H1 (cell line): ENCODE measurements at regions of chr11 and their contacts with region 1.

Region 1: GRCh38 chr11:88337181-88337986 is at the start of gene CTSC:
- DNase-seq: peak; percentile 60 to 96
- H3K4me3 ChIP-seq: peak within 1 kb of the TSS; percentile 72 to 96 (median 87)
- H3K27ac ChIP-seq: peak within 1 kb of the TSS; percentile 90
- H3K4me1 ChIP-seq: peaks cover 0 to 11% (median 4%) of the 10 kb centered on the region in 4 experiments; a peak in 4 of 7 replicates
- H3K27me3 ChIP-seq: no peaks in the 10 kb centered on the region
- CTCF ChIP-seq: no peak
- EP300 ChIP-seq: 0 out of 3 replicates have a peak, but pooled peaks of 1 of the 2 experiments have one; percentile 25
- POLR2A ChIP-seq: peak; percentile 84 to 94
- RAD21 ChIP-seq: 0 out of 4 replicates have a peak, but pooled peaks of 1 of the 2 experiments have one; percentile 1
- total RNA-seq, gene CTSC: 362 and 369 TPM in 2 replicates

Region 2: DNA sequence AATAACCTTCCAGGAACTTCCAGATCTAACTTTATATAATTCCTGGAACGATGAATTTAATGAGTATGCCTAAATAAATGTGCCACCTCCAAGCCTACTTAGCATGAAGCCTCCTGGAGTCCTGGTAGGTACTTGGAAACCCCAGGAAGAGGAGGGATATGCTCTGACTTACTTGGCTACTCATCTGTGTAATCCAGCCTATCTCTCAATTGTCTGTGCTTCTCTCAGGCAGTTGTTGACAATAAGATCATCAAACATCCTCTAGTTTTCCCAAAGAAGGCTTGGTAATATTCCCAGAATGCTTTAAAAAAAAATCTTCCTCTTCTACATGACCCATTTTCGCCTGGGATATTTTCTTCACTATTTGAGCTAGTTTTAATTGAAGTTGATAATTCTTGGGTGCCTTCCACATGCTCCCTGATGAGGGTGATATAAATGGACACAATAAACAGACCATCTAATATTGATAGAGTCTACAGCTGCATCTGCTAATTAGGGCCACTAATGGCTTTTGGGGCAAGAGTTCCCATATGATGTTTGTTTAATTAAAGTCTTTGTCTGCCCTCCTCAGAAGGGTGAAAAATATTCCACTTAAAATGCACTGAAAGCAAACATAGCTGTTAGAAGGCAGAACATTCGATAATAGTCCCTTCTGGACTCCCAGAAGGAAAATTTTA is 86.7 kb before region 1 on chr11:
- CTCF ChIA-PET with region 1: no interaction called
- POLR2A ChIA-PET with region 1: no interaction called
- DNase-seq: no peak
- H3K4me3 ChIP-seq: no peak overlapping the region
- H3K27ac ChIP-seq: no peak overlapping the region
- H3K4me1 ChIP-seq: no peaks in the 10 kb centered on the region
- H3K27me3 ChIP-seq: no peaks in the 10 kb centered on the region
- CTCF ChIP-seq: no peak
- EP300 ChIP-seq: no peak
- POLR2A ChIP-seq: no peak
- RAD21 ChIP-seq: no peak

Region 3: DNA sequence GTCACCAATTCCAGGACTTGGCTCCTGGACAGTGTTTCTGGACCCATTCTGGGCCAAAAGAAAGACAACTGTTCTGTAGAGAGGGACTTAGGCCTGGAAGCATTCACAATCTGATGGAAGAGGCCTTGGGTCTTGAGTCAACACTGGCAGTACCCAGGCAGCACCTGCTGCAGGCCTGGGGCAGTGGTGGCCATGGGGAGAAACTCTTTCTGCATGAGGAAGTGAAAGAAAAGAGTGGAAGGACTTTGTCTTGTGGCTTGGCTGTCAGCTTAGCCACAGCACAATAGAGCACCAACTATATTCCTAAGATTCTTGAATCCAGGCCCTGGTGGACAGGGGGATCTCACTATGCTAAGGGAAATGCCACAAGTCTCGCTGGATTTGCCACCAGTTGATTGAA is 70.5 kb before region 1 on chr11:
- CTCF ChIA-PET with region 1: no interaction called
- POLR2A ChIA-PET with region 1: no interaction called
- DNase-seq: no peak
- H3K4me3 ChIP-seq: no peak overlapping the region
- H3K27ac ChIP-seq: no peak overlapping the region
- H3K4me1 ChIP-seq: no peaks in the 10 kb centered on the region
- H3K27me3 ChIP-seq: no peaks in the 10 kb centered on the region
- CTCF ChIP-seq: no peak
- EP300 ChIP-seq: no peak
- POLR2A ChIP-seq: no peak
- RAD21 ChIP-seq: no peak

Region 4: GRCh38 chr11:88301488-88302140 is 35.8 kb before region 1 on chr11:
- CTCF ChIA-PET with region 1: interaction called, 8 read pairs
- POLR2A ChIA-PET with region 1: interaction called, 50 read pairs
- DNase-seq: no peak
- H3K4me3 ChIP-seq: peak overlapping the region in 1 of 4 experiments; percentile 19; a peak in 1 of 8 replicates
- H3K27ac ChIP-seq: peak overlapping the region; percentile 75
- H3K4me1 ChIP-seq: peaks cover 2 to 16% (median 12%) of the 10 kb centered on the region in 4 experiments; a peak in 6 of 7 replicates
- H3K27me3 ChIP-seq: no peaks in the 10 kb centered on the region
- CTCF ChIP-seq: no peak
- EP300 ChIP-seq: no peak
- POLR2A ChIP-seq: no peak
- RAD21 ChIP-seq: no peak

Region 5: DNA sequence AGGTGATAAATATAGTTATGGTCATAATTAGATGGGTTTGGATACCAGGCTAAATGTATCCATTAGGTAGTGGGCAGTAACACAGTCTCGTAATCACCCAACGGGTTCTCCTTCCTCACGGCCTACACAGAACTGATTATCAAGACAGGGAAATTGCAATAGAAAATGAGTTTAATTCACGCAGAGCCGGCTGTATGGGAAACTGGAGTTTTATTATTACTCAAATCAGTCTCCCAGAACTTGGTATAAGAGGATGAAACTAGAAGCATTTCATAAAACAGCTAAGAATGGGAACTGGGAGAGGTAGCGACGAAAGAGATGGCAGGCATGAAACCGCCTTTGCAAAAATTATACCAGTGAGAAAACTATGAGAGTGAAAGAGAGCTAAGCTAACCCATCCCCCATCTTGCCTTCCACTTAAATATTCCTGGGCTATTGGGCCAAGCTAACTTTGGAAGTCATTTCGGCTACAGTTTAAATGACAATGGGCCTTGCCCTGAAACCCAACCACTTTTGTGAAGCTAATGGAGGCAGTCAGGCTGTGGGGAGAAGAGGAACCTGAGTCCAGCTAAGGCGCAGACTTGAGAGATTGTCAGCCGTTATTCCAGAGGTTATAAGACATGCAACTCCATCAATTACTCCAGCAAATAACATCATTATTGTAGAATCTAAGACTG is 29.5 kb before region 1 on chr11:
- CTCF ChIA-PET with region 1: interaction called, 4 read pairs
- POLR2A ChIA-PET with region 1: interaction called, 50 read pairs
- DNase-seq: peak in 1 of 2 experiments; percentile 53
- H3K4me3 ChIP-seq: peak overlapping the region in 3 of 4 experiments; percentile 1 to 49 (median 16); a peak in 5 of 8 replicates
- H3K27ac ChIP-seq: peak overlapping the region; percentile 80
- H3K4me1 ChIP-seq: peaks cover 2 to 24% (median 10%) of the 10 kb centered on the region in 4 experiments; a peak in 6 of 7 replicates
- H3K27me3 ChIP-seq: no peaks in the 10 kb centered on the region
- CTCF ChIP-seq: no peak
- EP300 ChIP-seq: peak in 1 of 2 experiments; percentile 51; a peak in 1 of 3 replicates
- POLR2A ChIP-seq: peak; percentile 69 to 84
- RAD21 ChIP-seq: peak; percentile 2 to 30; a peak in 2 of 4 replicates

Region 6: DNA sequence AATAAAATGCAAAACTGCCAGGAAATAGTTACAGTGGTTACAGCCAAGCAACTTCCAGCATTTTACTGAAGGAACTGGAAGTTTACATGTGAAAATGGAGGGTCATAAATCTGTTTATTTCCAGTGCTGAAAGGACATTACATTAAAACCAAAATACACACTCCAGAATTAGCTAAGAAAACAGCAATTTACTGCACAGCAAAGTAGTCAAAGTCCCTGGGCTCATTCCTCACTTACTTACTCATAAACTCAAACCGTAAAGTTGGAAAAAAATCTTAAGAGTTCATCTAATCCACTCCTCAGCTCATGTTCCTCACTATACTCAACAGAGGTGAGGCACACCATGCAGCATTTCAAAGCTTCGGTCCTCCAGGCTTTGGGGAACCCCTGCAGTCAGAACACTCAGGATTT is 17.2 kb before region 1 on chr11:
- CTCF ChIA-PET with region 1: interaction called, 3 read pairs
- POLR2A ChIA-PET with region 1: interaction called, 129 read pairs
- DNase-seq: no peak
- H3K4me3 ChIP-seq: no peak overlapping the region
- H3K27ac ChIP-seq: no peak overlapping the region
- H3K4me1 ChIP-seq: peaks cover 0 to 9% (median 2%) of the 10 kb centered on the region in 4 experiments; a peak in 3 of 7 replicates
- H3K27me3 ChIP-seq: no peaks in the 10 kb centered on the region
- CTCF ChIP-seq: no peak
- EP300 ChIP-seq: no peak
- POLR2A ChIP-seq: no peak
- RAD21 ChIP-seq: no peak

Region 7: DNA sequence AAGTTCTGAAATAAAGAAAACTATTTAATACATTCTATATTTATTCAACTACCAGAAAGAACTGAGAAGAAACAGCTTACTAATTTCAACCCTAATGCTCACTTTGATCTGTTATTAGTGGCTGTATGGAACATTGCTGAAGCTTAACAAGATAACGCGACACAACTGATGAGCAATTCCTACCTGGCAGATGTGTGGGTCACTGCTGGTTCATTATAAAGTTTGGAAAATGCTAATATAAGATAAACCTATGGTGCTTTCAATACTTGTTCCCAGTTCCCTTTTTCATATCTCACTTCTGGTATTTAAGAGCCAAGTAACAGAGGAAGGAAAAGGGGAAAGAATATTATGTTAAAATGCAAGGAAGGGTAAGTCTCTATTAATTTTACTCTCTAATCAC is 10.3 kb before region 1 on chr11:
- CTCF ChIA-PET with region 1: interaction called, 10 read pairs
- POLR2A ChIA-PET with region 1: interaction called, 129 read pairs
- DNase-seq: no peak
- H3K4me3 ChIP-seq: no peak overlapping the region
- H3K27ac ChIP-seq: no peak overlapping the region
- H3K4me1 ChIP-seq: peaks cover 4 to 13% (median 6%) of the 10 kb centered on the region in 4 experiments; a peak in 5 of 7 replicates
- H3K27me3 ChIP-seq: no peaks in the 10 kb centered on the region
- CTCF ChIP-seq: no peak
- EP300 ChIP-seq: no peak
- POLR2A ChIP-seq: no peak
- RAD21 ChIP-seq: no peak

Region 8: GRCh38 chr11:88353835-88354496 is 16.6 kb after region 1 on chr11:
- CTCF ChIA-PET with region 1: interaction called, 20 read pairs
- POLR2A ChIA-PET with region 1: interaction called, 7 read pairs
- DNase-seq: no peak
- H3K4me3 ChIP-seq: no peak overlapping the region
- H3K27ac ChIP-seq: no peak overlapping the region
- H3K4me1 ChIP-seq: peaks cover 0 to 5% (median 0%) of the 10 kb centered on the region in 4 experiments; a peak in 1 of 7 replicates
- H3K27me3 ChIP-seq: no peaks in the 10 kb centered on the region
- CTCF ChIP-seq: no peak
- EP300 ChIP-seq: no peak
- POLR2A ChIP-seq: no peak
- RAD21 ChIP-seq: no peak

Region 9: GRCh38 chr11:88414385-88414861 is 77.0 kb after region 1 on chr11:
- CTCF ChIA-PET with region 1: no interaction called
- POLR2A ChIA-PET with region 1: no interaction called
- DNase-seq: no peak
- H3K4me3 ChIP-seq: no peak overlapping the region
- H3K27ac ChIP-seq: no peak overlapping the region
- H3K4me1 ChIP-seq: no peaks in the 10 kb centered on the region
- H3K27me3 ChIP-seq: no peaks in the 10 kb centered on the region; a peak in 1 of 7 replicates
- CTCF ChIP-seq: no peak
- EP300 ChIP-seq: no peak
- POLR2A ChIP-seq: no peak
- RAD21 ChIP-seq: no peak

Region 10: GRCh38 chr11:88455974-88456373 is 118.6 kb after region 1 on chr11:
- CTCF ChIA-PET with region 1: no interaction called
- POLR2A ChIA-PET with region 1: no interaction called
- DNase-seq: no peak
- H3K4me3 ChIP-seq: no peak overlapping the region
- H3K27ac ChIP-seq: no peak overlapping the region
- H3K4me1 ChIP-seq: peaks cover 0 to 4% (median 0%) of the 10 kb centered on the region in 4 experiments; a peak in 2 of 7 replicates
- H3K27me3 ChIP-seq: no peaks in the 10 kb centered on the region
- CTCF ChIP-seq: no peak
- EP300 ChIP-seq: no peak
- POLR2A ChIP-seq: no peak
- RAD21 ChIP-seq: no peak